ENCODE measurements at regions of chr4 and their contacts with region 1.

Region 1: GRCh38 chr4:80446664-80447063 is 111.1 kb downstream of the CFAP299 start:
- DNase-seq: peak; percentile 52
- ATAC-seq: peak; percentile 57
- H3K4me3 ChIP-seq: no peak overlapping the region
- H3K27ac ChIP-seq: no peak overlapping the region
- H3K4me1 ChIP-seq: peaks cover 6% of the 10 kb centered on the region
- H3K27me3 ChIP-seq: no peaks in the 10 kb centered on the region
- CTCF ChIP-seq: no peak
- POLR2A ChIP-seq: no peak
- RAD21 ChIP-seq: no peak

Region 2: GRCh38 chr4:80465238-80465637 is 18.6 kb after region 1 on chr4:
- CTCF ChIA-PET with region 1: no interaction called
- POLR2A ChIA-PET with region 1: no interaction called
- dilution Hi-C with region 1: no loop called
- in situ Hi-C with region 1: no loop called
- intact Hi-C with region 1: loop called (anchors 2 kb)
- DNase-seq: peak; percentile 26
- ATAC-seq: peak; percentile 53
- H3K4me3 ChIP-seq: no peak overlapping the region
- H3K27ac ChIP-seq: no peak overlapping the region; the same call in 1 of the 2 replicates
- H3K4me1 ChIP-seq: peaks cover 6% of the 10 kb centered on the region; the same call in 1 of the 2 replicates
- H3K27me3 ChIP-seq: no peaks in the 10 kb centered on the region
- CTCF ChIP-seq: no peak
- POLR2A ChIP-seq: no peak
- RAD21 ChIP-seq: no peak

Region 3: GRCh38 chr4:80484712-80485111 is 38.0 kb after region 1 on chr4:
- CTCF ChIA-PET with region 1: no interaction called
- POLR2A ChIA-PET with region 1: no interaction called
- dilution Hi-C with region 1: no loop called
- in situ Hi-C with region 1: no loop called
- intact Hi-C with region 1: loop called (anchors 2 kb)
- DNase-seq: peak; percentile 50
- ATAC-seq: peak; percentile 67
- H3K4me3 ChIP-seq: no peak overlapping the region
- H3K27ac ChIP-seq: no peak overlapping the region
- H3K4me1 ChIP-seq: no peaks in the 10 kb centered on the region
- H3K27me3 ChIP-seq: no peaks in the 10 kb centered on the region
- CTCF ChIP-seq: no peak
- POLR2A ChIP-seq: no peak
- RAD21 ChIP-seq: no peak

Measured in IMR-90 (cell line).